BJ (cell line): ENCODE measurements at regions of chr11 and their contacts with region 1.

Region 1: DNA sequence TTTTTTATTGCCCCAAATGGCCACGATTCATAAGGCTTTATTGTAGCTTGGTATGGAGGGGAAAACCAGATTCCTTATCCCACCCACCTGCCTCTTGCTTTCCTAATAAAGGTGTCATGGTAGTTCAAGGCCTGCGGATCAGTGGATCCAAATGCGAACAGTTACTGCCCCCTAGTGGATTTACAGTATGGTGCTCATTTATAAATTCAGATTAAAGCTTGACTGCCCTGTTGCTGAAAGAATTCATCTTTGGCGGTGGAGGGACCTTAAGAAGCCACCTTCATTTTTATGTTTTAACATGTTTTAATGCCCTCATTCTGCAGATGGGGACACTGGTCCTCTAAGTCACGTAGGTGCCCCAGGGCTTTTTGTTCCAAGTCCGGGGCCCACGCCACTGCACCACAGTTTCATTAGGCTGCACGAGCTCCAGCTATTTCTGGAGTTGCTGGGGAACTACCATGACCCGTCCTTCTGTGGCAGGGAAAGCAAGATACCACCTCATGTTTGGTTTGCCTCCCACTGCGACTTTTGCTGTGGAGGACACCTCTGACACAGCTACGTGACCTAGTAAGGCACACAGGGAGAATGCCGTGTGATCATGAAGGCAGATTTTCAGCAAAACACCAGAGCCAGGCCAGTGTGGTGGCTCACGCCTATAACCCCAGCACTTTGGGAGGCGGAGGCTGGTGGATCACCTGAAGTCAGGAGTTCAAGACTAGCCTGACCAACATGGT is 15.6 kb upstream of the INCENP start:
- DNase-seq: no peak
- H3K4me3 ChIP-seq: no peak overlapping the region
- H3K27me3 ChIP-seq: no peaks in the 10 kb centered on the region
- CTCF ChIP-seq: peak; percentile 72

Region 2: DNA sequence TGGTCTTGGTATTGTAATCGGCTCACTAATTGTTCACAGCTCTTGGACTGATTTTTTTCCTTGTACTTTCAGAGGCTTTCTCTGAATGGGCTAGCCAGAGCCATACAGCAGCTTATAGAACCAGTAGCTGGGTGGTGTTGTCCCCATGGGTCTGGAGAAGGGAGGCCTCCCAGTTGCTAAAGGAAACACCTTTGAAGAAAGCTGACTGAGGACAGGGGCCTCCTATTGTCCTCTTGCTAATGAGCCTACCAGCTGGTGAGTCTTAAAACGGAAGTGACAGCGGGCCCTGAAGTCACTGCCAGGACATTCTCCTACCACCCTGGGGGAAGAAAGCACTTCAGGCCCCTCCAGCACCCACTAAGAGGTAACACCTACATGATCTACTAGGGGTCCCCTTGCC is 226.8 kb before region 1 on chr11:
- CTCF ChIA-PET with region 1: interaction called, 12 read pairs
- POLR2A ChIA-PET with region 1: no interaction called
- DNase-seq: no peak
- H3K4me3 ChIP-seq: no peak overlapping the region
- H3K27me3 ChIP-seq: no peaks in the 10 kb centered on the region
- CTCF ChIP-seq: no peak

Region 3: GRCh38 chr11:62120001-62120400 is 11.8 kb after region 1 on chr11:
- CTCF ChIA-PET with region 1: interaction called, 12 read pairs
- POLR2A ChIA-PET with region 1: no interaction called
- DNase-seq: no peak
- H3K4me3 ChIP-seq: no peak overlapping the region
- H3K27me3 ChIP-seq: no peaks in the 10 kb centered on the region
- CTCF ChIP-seq: no peak